ENCODE measurements at regions of chr7 and their contacts with region 1.

Region 1: GRCh38 chr7:134954197-134955082 is 31.9 kb upstream of the AGBL3 start:
- DNase-seq: no peak
- H3K4me3 ChIP-seq: no peak overlapping the region
- H3K27ac ChIP-seq: peak overlapping the region in 2 of 3 donors; percentile 12 to 31
- H3K4me1 ChIP-seq: peaks cover 0 to under 1% of the 10 kb centered on the region in 2 donors
- H3K27me3 ChIP-seq: no peaks in the 10 kb centered on the region
- CTCF ChIP-seq: peak; percentile 12 to 79 (median 48)
- POLR2A ChIP-seq: no peak

Region 2: DNA sequence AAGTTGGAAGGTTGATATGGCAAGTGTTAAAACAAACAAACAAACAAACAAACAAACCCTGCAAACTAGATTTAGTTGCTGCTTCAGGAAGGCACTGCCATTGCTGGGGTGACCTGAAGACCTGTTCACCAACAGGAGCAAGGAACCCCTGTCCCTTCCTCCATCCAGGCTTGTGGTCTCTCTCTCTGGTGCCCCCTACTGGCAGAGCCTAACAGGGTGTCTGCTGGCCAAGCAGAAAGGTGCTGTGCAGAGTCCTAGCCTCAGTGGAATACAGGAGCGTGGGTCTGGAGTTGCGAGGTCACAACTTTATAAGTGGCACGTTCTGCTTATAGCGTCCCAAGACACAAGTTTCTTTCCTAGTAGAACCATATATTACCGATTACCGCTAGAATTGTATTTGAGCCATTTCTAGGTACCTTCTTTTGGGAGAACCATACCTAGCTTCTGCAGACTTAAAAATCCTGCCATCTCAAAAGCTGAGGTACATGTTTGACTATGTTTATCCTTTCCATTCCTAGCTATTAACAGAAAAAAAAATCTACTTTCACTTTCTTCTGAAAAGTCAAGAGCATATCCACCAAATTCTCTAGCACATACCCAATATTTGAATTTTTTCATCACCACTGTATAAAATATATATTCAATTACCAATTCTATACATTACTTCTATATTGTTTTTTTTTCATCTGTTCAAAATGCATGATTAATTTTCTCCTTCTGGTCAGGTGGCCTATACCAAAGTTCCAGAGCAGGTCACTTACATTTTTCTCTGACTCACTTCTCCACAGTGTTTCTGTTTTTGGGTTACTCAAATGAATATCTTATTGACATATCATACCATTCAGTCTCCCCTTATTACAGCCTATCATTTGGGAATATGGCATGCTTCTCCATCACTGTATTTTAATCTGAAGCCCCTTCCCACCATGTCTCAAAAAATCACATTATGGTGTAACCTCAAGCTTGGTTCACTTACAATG is 204.1 kb before region 1 on chr7:
- intact Hi-C with region 1: loop called (anchors 10 kb)
- DNase-seq: peak; percentile 49 to 61
- H3K4me3 ChIP-seq: no peak overlapping the region
- H3K27ac ChIP-seq: no peak overlapping the region
- H3K4me1 ChIP-seq: no peaks in the 10 kb centered on the region
- H3K27me3 ChIP-seq: no peaks in the 10 kb centered on the region
- CTCF ChIP-seq: peak in 5 of 6 experiments; percentile 55 to 69 (median 56)
- POLR2A ChIP-seq: no peak